Activated CD8-positive, alpha-beta T cell treated with anti-CD3 and anti-CD28 coated beads, Interleukin-2, amount 10 ng/mL, durations not matched to agents 7 days and 5 days (primary cell): ENCODE measurements at regions of chr3 and their contacts with region 1.

Region 1: DNA sequence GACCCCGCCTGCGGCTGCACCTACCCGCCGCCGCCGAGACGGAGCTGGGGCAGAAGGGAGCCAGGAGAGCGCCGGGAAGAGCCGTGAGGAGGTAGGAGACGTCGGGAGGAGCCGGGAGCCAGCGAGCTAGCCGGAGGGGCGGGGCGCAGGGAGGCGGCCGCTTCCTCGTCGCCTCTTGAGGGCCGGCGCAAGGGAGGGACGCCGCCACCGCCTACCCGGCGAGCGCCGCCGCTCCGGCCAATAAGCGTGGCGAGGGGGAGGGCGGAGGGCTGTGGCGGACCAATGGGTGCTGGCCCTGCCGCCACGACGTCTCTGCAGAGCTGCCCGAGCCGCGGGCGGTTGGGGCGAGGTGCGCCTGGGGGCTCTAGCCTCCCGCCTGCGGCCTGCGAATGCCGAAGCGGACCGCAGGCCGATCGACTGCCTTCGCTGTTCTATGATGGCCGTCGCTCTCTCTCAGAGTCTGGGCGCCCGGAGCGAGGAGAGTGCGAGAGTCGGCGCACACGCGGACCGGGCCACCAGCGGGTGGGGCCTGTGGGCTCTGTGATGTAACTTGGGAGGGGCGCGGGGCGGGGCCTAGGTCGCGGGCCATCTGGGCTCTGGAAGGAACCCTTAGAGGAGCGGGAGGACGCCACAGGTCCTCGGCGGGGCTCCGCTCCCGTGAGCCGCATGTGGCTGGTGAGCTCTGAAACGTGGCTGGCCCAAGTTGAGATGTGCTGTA is 72.7 kb upstream of the MAP4 start:
- DNase-seq: peak; percentile 96
- ATAC-seq: peak; percentile 98
- H3K4me3 Mint-ChIP-seq: peak overlapping the region; percentile 90
- H3K27ac Mint-ChIP-seq: peak overlapping the region; percentile 99
- H3K4me1 Mint-ChIP-seq: peaks cover 33% of the 10 kb centered on the region
- H3K27me3 Mint-ChIP-seq: peaks cover 2% of the 10 kb centered on the region

Region 2: DNA sequence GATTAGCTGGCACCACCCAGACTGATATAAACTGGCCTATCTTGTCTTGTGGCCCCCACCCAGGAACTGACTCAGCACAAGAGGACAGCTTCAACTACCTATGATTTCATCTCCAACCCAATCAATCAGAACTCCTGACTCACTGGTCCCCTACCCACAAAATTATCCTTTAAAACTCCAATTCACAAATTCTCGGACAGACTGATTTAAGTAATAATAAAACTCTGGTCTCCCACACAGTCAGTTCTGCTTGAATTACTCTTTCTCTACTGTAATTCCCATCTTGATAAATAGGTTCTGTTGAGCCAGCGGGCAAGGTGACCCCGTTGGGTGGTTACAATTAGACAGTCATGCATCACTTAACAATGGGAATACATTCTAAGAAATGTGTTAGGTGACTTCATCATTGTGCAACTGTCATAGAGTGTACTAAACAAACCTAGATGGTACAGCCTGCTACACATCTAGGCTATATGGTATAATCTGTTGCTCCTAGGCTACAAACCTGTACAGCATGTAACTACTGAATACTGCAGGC is 24.5 kb before region 1 on chr3:
- CTCF ChIA-PET with region 1: no interaction called
- POLR2A ChIA-PET with region 1: no interaction called
- DNase-seq: no peak
- ATAC-seq: no peak
- H3K4me3 Mint-ChIP-seq: no peak overlapping the region
- H3K27ac Mint-ChIP-seq: no peak overlapping the region
- H3K4me1 Mint-ChIP-seq: peaks cover 18% of the 10 kb centered on the region
- H3K27me3 Mint-ChIP-seq: no peaks in the 10 kb centered on the region

Region 3: DNA sequence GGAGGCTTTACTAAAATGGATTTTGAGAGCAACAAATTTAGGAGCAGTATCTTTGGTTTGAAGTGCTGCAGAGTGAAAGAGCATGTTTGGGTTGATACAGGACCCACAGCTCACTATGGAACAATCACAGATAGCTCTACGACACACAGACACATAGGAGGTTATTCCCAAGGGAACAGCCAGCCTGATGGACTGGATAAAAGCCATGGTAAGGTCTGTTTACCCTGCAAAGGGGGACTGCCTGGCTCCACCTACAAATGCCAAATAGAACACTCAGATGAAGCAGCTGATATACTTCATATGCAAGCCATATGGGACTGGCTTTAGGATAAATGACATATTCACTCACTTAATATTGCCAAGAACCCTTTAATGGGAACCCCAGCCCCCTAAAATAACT is 23.9 kb after region 1 on chr3:
- CTCF ChIA-PET with region 1: interaction called, 6 read pairs
- POLR2A ChIA-PET with region 1: interaction called, 21 read pairs
- DNase-seq: peak; percentile 23
- ATAC-seq: no peak
- H3K4me3 Mint-ChIP-seq: peak overlapping the region; percentile 4
- H3K27ac Mint-ChIP-seq: peak overlapping the region; percentile 66
- H3K4me1 Mint-ChIP-seq: peaks cover 32% of the 10 kb centered on the region
- H3K27me3 Mint-ChIP-seq: no peaks in the 10 kb centered on the region

Region 4: GRCh38 chr3:48478596-48479555 is 390.0 kb after region 1 on chr3:
- CTCF ChIA-PET with region 1: no interaction called
- POLR2A ChIA-PET with region 1: no interaction called
- DNase-seq: peak; percentile 82
- ATAC-seq: peak; percentile 88
- H3K4me3 Mint-ChIP-seq: peak overlapping the region; percentile 83
- H3K27ac Mint-ChIP-seq: peak overlapping the region; percentile 100
- H3K4me1 Mint-ChIP-seq: peaks cover 56% of the 10 kb centered on the region
- H3K27me3 Mint-ChIP-seq: no peaks in the 10 kb centered on the region